Mammary epithelial cell (primary cell): ENCODE measurements at regions of chr17 and their contacts with region 1.

Region 1: DNA sequence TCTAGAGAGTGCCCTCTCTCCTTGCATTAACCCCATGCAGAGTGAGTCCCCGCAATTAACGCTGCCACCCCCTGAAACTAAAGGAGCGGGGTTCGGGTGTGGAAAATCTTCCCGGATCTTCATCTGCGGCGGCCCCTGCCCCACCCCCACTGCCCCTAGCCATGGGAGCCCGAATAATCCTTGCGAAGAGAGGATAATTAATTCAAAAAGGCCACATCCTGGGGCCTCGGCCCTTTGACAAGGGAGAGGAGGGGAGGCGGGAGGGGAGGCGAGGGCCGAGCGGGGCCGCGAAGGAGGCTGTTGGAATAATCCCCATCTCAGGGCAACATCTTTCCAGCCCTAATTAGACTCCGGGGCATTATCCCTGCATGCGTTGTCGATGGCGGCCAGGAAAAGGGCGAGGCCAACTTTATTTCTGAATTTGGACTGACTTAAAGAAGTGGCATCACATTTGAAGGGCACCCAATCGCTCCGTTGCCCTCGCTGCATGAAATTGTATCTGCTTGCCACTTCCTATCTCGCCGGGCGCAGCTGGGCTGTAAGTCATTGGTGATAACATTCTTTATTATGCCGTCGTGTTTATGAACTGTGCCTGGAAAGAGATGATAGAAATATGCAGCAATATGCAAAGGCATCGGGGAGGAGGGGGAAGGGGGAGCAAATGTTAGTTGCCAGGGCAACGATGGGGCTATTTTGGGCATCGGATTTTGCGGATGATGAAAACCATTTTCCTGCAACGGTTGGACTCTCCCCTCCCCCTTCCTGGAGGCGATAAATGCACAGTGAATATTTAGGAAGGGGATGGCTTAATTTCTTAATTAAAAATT is 387.1 kb upstream of the TNRC6C start:
- DNase-seq: no peak
- H3K4me3 ChIP-seq: no peak overlapping the region
- H3K27ac ChIP-seq: no peak overlapping the region
- H3K4me1 ChIP-seq: no peaks in the 10 kb centered on the region
- H3K27me3 ChIP-seq: no peaks in the 10 kb centered on the region
- CTCF ChIP-seq: no peak

Region 2: DNA sequence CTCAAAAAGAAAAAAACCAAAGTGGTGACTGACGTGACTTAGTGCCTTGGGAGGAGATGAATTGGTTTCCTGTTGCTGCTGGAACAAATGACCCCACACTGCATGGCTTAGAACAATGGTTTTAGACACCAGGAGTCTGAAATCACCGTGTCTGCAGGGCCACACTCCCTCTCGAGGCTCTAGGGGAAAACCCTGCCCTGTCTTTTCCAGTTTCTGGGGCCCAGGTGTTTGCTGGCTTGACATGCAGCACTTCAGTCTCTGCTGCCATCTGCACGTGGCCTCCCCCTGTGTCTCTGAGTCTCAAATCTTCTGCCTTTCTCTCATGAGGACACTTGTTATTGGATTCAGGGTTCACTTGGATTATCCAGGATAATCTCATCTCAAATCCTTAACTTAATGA is 63.3 kb after region 1 on chr17:
- CTCF ChIA-PET with region 1: no interaction called
- dilution Hi-C with region 1: loop called (anchors 5 kb)
- in situ Hi-C with region 1: no loop called
- intact Hi-C with region 1: no loop called
- DNase-seq: no peak
- H3K4me3 ChIP-seq: no peak overlapping the region
- H3K27ac ChIP-seq: no peak overlapping the region
- H3K4me1 ChIP-seq: no peaks in the 10 kb centered on the region
- H3K27me3 ChIP-seq: no peaks in the 10 kb centered on the region
- CTCF ChIP-seq: no peak